ENCODE measurements at regions of chr9 and their contacts with region 1.

Region 1: GRCh38 chr9:113349445-113350094 is at the start of gene BSPRY:
- DNase-seq: peak in 2 of 3 donors; percentile 68 to 81
- H3K4me3 ChIP-seq: peak within 1 kb of the TSS; percentile 68 to 94 (median 83)
- H3K27ac ChIP-seq: peak within 1 kb of the TSS; percentile 89 to 90
- H3K4me1 ChIP-seq: peaks cover 22 to 66% (median 47%) of the 10 kb centered on the region in 4 experiments
- H3K27me3 ChIP-seq: no peaks in the 10 kb centered on the region

Region 2: GRCh38 chr9:113361304-113362018 is 11.9 kb after region 1 on chr9:
- CTCF ChIA-PET with region 1: interaction called, 48 read pairs
- POLR2A ChIA-PET with region 1: interaction called, 4 read pairs
- DNase-seq: no peak
- H3K4me3 ChIP-seq: no peak overlapping the region
- H3K27ac ChIP-seq: no peak overlapping the region
- H3K4me1 ChIP-seq: no peaks in the 10 kb centered on the region
- H3K27me3 ChIP-seq: no peaks in the 10 kb centered on the region

Region 3: DNA sequence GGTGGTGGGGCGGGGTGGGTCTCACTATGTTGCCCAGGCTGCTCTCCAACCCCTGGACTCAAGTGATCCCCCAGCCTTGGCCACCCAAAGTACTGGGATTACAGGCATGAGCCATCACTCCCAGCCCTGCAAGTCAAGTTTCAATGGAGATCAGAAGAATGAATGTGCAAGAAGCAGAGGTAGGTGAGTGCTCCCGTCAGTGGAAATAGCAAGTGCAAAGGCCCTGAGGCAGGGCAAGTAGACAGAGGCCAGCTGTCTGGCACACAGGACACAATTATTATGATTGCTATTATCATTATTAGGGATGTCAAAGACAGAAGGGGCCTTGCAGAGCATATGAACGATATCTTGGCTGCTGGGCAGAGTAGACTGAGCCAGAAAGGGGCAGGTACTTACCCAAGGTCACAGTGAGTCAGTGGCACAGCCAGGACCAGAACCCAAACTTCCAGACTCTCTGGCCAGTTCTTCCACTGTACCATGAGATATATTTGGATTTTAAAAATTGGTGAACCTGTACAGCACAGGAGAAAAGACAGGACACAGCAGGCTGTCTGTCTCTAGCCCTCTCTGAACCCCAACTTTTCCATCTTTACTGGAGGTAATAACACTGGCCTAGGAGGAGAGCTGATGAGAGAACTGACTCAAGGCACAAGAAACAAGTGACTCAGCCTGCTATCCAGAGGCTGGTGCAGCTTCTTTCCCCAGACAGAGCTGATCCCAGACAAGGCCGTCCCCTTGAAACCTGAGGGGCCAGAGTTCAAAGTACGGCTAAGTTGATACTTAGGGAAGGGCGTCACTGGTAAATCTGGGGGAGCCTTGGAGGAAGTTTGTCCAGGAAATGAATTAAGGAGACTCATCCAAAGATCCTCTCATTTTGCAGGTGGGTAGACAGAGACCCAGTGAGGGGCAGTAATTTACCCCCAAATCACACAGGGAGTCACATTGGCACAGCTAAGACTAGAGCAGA is 25.8 kb after region 1 on chr9:
- CTCF ChIA-PET with region 1: interaction called, 15 read pairs
- POLR2A ChIA-PET with region 1: interaction called, 3 read pairs
- DNase-seq: no peak
- H3K4me3 ChIP-seq: peak overlapping the region in 3 of 7 experiments; percentile 49 to 92 (median 79)
- H3K27ac ChIP-seq: no peak overlapping the region
- H3K4me1 ChIP-seq: peaks cover 0 to 21% (median 10%) of the 10 kb centered on the region in 4 experiments
- H3K27me3 ChIP-seq: no peaks in the 10 kb centered on the region

Region 4: DNA sequence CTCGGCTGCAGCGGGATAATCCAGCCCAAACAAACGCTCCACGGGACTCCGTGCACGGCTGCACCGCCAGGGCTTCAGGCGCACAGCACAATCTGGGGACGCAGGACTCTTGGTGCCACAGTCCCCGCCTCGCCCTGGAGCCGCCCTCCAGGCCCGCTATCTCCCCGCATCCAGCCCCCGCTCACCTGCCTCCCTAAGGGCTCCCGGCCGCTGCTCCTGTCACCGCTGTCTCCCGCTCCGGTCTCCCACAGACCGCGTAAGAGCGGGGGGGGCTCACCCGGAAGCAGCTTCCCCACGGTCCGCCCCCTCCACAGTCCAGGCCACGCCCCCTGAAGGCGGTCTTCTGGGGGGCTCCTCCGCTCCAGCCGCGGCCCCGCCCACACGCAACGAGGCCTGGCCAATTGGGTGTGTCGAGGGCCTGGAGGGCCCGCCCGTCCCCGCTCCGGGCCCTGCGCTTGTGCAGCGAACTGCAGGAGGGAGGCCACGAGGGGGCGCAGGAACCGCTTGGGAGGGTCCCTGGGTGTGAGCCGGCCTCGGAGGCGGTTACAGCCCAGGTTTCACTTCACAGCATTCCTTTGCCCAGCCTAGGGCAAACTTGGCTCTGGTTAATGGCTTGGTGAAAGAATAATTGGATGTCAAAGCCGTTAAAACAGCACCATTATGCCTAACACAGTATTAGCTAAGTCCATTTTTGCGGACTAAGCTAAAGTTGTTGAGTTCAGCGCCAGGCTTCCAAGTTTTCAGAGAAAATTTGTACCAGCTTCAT is 51.6 kb after region 1 on chr9 and contains the start of gene ALAD:
- CTCF ChIA-PET with region 1: interaction called, 31 read pairs
- POLR2A ChIA-PET with region 1: interaction called, 3 read pairs
- DNase-seq: peak; percentile 99
- H3K4me3 ChIP-seq: peak within 1 kb of the TSS; percentile 66 to 96 (median 92)
- H3K27ac ChIP-seq: peak within 1 kb of the TSS; percentile 40 to 66
- H3K4me1 ChIP-seq: peaks cover 4 to 22% (median 17%) of the 10 kb centered on the region in 4 experiments
- H3K27me3 ChIP-seq: no peaks in the 10 kb centered on the region

Measured in common myeloid progenitor, CD34-positive (primary cell).